Naive thymus-derived CD4-positive, alpha-beta T cell (primary cell): ENCODE measurements at regions of chr7 and their contacts with region 1.

Region 1: GRCh38 chr7:92904292-92905131 is 68.1 kb upstream of the CDK6 start:
- DNase-seq: peak in 8 of 9 donors; percentile 21 to 80 (median 42)
- ATAC-seq: peak; percentile 99
- H3K4me3 ChIP-seq: no peak overlapping the region
- H3K4me3 Mint-ChIP-seq: peak overlapping the region in 1 of 10 donors; percentile 44
- H3K27ac ChIP-seq: no peak overlapping the region
- H3K27ac Mint-ChIP-seq: peak overlapping the region in 2 of 9 donors; percentile 39 to 83
- H3K4me1 ChIP-seq: peaks cover 0 to 7% of the 10 kb centered on the region in 2 donors
- H3K4me1 Mint-ChIP-seq: peaks cover 0 to 23% (median 12%) of the 10 kb centered on the region in 7 donors
- H3K27me3 ChIP-seq: no peaks in the 10 kb centered on the region
- H3K27me3 Mint-ChIP-seq: peaks cover 0 to 5% (median 0%) of the 10 kb centered on the region in 5 donors

Region 2: GRCh38 chr7:92843781-92844180 is 60.7 kb before region 1 on chr7:
- CTCF ChIA-PET with region 1: no interaction called
- POLR2A ChIA-PET with region 1: no interaction called
- intact Hi-C with region 1: no loop called
- DNase-seq: no peak
- ATAC-seq: no peak
- H3K4me3 ChIP-seq: no peak overlapping the region
- H3K4me3 Mint-ChIP-seq: no peak overlapping the region
- H3K27ac ChIP-seq: no peak overlapping the region
- H3K27ac Mint-ChIP-seq: no peak overlapping the region
- H3K4me1 ChIP-seq: no peaks in the 10 kb centered on the region
- H3K4me1 Mint-ChIP-seq: peaks cover 0 to 3% (median under 1%) of the 10 kb centered on the region in 7 donors
- H3K27me3 ChIP-seq: no peaks in the 10 kb centered on the region
- H3K27me3 Mint-ChIP-seq: peaks cover 0 to 40% (median 3%) of the 10 kb centered on the region in 5 donors

Region 3: DNA sequence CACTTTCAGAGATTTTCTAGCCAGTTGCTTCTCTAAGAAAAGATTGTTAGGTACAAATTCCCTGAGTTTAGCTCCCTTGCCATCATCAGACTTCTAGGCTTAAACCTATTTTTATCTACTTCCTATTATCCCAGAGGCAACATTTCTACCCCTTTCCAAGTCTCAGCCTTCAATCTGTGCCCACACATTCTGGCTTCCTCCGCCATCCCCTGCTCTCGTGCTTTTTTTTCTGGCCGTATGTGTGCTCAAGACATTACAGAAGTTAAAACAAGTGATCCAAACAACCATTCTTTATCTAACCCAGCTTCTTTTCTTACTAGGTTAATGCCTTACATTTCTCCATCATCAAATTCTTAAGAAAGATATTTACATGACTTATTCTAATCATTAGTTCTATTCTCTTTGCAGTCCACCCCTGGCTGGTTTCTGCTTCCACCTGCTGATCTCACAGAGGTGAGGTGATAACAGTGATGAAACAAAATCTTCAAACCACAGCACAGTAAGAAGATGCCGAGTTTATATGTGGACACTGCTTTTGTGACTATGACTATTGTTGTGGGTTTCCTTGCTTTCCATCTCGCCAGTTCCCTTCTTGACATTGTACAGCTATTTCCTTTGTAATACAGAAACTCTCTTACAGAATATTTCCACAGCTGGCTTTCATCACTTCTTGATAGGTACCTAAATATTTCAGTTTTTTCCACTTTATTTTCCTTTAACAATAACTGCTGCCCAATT is 49.8 kb before region 1 on chr7:
- CTCF ChIA-PET with region 1: no interaction called
- POLR2A ChIA-PET with region 1: no interaction called
- intact Hi-C with region 1: loop called in 1 of 2 experiments (anchors 2 kb)
- DNase-seq: no peak
- ATAC-seq: no peak
- H3K4me3 ChIP-seq: no peak overlapping the region
- H3K4me3 Mint-ChIP-seq: peak overlapping the region in 1 of 10 donors; percentile 18
- H3K27ac ChIP-seq: no peak overlapping the region
- H3K27ac Mint-ChIP-seq: peak overlapping the region in 1 of 9 donors; percentile 55
- H3K4me1 ChIP-seq: no peaks in the 10 kb centered on the region
- H3K4me1 Mint-ChIP-seq: peaks cover 0 to 10% (median 0%) of the 10 kb centered on the region in 7 donors
- H3K27me3 ChIP-seq: peaks cover 0 to 4% of the 10 kb centered on the region in 2 donors
- H3K27me3 Mint-ChIP-seq: peaks cover 0 to 17% (median 4%) of the 10 kb centered on the region in 5 donors

Region 4: DNA sequence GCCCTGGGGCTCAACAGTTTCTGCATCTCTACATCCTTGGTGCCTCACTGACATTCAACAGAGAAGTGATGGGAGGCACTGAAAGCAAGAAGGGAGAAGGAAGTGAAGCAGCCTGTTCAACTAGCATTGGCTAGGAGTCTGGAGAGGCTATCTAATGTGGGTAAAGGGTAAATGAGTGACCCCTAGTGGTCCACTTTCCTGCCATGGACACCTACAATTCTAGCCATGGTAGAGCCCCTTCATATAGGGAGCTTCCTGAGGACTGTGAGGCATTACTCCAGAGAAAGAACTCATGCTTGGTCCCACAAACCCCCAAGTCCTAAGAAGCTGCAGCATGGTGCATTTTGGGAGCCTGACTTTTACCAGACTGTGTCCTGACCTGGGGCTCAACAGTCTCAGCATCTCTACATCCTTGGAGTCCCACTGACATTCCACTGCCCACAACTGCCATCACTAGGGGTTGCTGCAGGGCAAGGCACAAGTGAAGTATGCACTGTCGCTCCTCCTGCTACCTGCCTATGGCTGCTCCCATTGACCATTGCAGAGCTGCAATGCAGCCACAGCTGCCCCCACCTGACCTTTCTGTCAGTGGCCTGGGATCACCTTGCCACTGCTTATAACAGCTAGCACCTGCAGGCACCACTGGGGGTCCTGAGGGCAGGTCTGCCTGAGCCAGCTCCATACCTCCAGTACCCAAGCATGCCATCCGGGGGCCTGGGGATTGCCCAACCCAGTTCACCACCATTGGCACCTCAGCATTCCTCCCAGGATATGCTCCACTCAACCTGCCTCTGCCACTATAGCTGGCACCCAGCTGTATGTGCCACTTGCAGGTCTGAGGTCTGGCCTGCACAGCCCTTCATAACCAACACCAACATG is 24.1 kb before region 1 on chr7:
- CTCF ChIA-PET with region 1: no interaction called
- POLR2A ChIA-PET with region 1: no interaction called
- intact Hi-C with region 1: loop called in 1 of 2 experiments (anchors 1 kb)
- DNase-seq: no peak
- ATAC-seq: peak; percentile 42
- H3K4me3 ChIP-seq: no peak overlapping the region
- H3K4me3 Mint-ChIP-seq: no peak overlapping the region
- H3K27ac ChIP-seq: no peak overlapping the region
- H3K27ac Mint-ChIP-seq: no peak overlapping the region
- H3K4me1 ChIP-seq: peaks cover 0 to 9% of the 10 kb centered on the region in 2 donors
- H3K4me1 Mint-ChIP-seq: peaks cover 8 to 33% (median 25%) of the 10 kb centered on the region in 7 donors
- H3K27me3 ChIP-seq: no peaks in the 10 kb centered on the region
- H3K27me3 Mint-ChIP-seq: peaks cover 0 to 7% (median 0%) of the 10 kb centered on the region in 5 donors

Region 5: GRCh38 chr7:93036807-93037206 is 132.3 kb after region 1 on chr7:
- CTCF ChIA-PET with region 1: no interaction called
- POLR2A ChIA-PET with region 1: no interaction called
- intact Hi-C with region 1: loop called in 1 of 2 experiments (anchors 5 kb)
- DNase-seq: no peak
- ATAC-seq: peak; percentile 36
- H3K4me3 ChIP-seq: no peak overlapping the region
- H3K4me3 Mint-ChIP-seq: peak overlapping the region in 2 of 10 donors; percentile 9 to 16
- H3K27ac ChIP-seq: no peak overlapping the region
- H3K27ac Mint-ChIP-seq: peak overlapping the region in 3 of 9 donors; percentile 6 to 78 (median 49)
- H3K4me1 ChIP-seq: peaks cover 0 to 7% of the 10 kb centered on the region in 2 donors
- H3K4me1 Mint-ChIP-seq: peaks cover 0 to 30% (median 13%) of the 10 kb centered on the region in 7 donors
- H3K27me3 ChIP-seq: no peaks in the 10 kb centered on the region
- H3K27me3 Mint-ChIP-seq: no peaks in the 10 kb centered on the region